Endothelial cell of umbilical vein (primary cell): ENCODE measurements at regions of chr17 and their contacts with region 1.

Region 1: GRCh38 chr17:19766422-19767270 is 18.5 kb upstream of the ALDH3A1 start:
- DNase-seq: peak; percentile 69
- H3K4me3 ChIP-seq: no peak overlapping the region
- H3K27ac ChIP-seq: no peak overlapping the region
- H3K4me1 ChIP-seq: peaks cover 5% of the 10 kb centered on the region
- H3K27me3 ChIP-seq: no peaks in the 10 kb centered on the region
- CTCF ChIP-seq: peak; percentile 96 to 99
- POLR2A ChIP-seq: no peak

Region 2: DNA sequence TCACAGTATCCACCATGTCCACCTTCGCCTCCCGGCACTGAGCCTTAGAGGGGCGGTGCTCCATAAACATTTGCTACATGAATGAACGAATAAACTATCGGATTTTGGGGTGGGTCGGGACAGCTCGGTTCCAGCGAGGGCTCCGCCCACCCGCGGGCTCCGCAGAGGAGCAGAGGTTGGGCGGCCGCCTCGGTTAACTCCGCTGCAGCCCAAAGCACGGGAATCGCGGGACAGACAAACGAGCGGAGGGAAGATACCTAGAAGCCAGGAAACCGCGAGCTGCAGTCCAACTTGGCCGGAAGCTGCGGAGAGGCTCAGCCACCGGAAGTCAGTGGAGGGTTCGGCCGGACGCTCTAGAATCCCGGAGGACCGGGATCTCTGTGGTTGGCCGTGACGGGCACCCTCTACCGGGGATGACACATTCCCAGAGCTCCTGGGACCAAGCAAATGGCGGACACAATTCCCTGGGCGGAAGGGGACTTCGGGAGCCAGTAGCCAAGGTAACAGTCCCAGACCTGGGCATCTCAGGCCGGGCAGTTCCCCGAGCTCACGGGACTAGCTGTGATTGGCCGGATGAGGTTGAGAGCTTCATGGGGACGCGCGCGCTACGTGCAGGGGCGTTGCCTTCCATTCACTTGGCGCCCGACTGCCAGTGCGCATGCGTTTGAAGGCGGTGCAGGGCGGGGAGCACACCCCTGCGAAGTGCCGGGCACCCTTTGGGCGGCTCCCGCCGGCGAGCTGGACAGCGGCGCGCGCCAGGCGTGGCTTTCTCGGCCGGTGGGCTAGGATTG is 388.8 kb before region 1 on chr17:
- CTCF ChIA-PET with region 1: interaction called, 15 read pairs
- POLR2A ChIA-PET with region 1: no interaction called
- dilution Hi-C with region 1: no loop called
- intact Hi-C with region 1: no loop called
- DNase-seq: peak; percentile 100
- H3K4me3 ChIP-seq: peak overlapping the region; percentile 72 to 94 (median 73)
- H3K27ac ChIP-seq: peak overlapping the region; percentile 59
- H3K4me1 ChIP-seq: peaks cover 7% of the 10 kb centered on the region
- H3K27me3 ChIP-seq: no peaks in the 10 kb centered on the region
- CTCF ChIP-seq: no peak
- POLR2A ChIP-seq: peak; percentile 83

Region 3: GRCh38 chr17:19513897-19514488 is 252.7 kb before region 1 on chr17:
- CTCF ChIA-PET with region 1: interaction called, 65 read pairs
- POLR2A ChIA-PET with region 1: interaction called, 7 read pairs
- dilution Hi-C with region 1: no loop called
- intact Hi-C with region 1: loop called (anchors 1 kb)
- DNase-seq: peak; percentile 73
- H3K4me3 ChIP-seq: no peak overlapping the region
- H3K27ac ChIP-seq: no peak overlapping the region
- H3K4me1 ChIP-seq: no peaks in the 10 kb centered on the region
- H3K27me3 ChIP-seq: no peaks in the 10 kb centered on the region
- CTCF ChIP-seq: peak; percentile 81 to 90
- POLR2A ChIP-seq: no peak

Region 4: DNA sequence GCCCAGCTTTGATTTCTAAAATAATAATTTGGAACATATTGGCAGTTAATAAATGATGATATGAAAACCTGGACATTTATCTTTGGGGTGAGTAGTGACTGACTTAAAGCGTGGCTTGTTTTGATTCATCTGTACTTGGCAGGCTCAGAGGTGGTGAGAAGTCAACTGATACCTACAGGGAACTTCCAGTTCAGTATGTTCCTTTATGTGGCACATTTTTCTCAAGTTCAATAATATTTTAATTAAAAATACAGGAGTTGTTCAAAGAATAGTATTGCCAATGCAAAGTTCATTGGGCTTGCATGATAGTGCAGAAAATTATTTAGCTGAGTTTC is 198.7 kb before region 1 on chr17:
- CTCF ChIA-PET with region 1: no interaction called
- POLR2A ChIA-PET with region 1: no interaction called
- dilution Hi-C with region 1: no loop called
- intact Hi-C with region 1: no loop called
- DNase-seq: no peak
- H3K4me3 ChIP-seq: no peak overlapping the region
- H3K27ac ChIP-seq: no peak overlapping the region
- H3K4me1 ChIP-seq: no peaks in the 10 kb centered on the region
- H3K27me3 ChIP-seq: no peaks in the 10 kb centered on the region
- CTCF ChIP-seq: no peak
- POLR2A ChIP-seq: no peak

Region 5: DNA sequence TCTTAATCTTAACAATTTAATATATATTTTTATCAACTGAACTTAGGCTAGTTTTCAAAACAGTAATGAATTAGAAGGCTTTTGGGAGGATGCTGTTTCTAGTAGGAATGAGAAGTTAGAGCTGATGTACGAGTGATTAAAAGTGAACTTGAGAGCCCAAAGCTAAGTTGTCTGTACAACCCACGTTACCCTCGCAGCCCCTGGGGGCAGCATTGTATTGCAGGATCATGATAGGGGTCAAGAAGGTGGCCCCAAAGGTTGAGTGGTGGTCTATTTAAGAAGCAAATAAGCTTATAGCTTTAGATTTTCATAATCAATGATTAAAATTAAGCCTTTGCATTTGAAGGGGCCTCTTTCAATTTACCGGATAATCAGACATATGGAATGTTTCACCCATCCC is 151.7 kb before region 1 on chr17:
- CTCF ChIA-PET with region 1: interaction called, 14 read pairs
- POLR2A ChIA-PET with region 1: no interaction called
- dilution Hi-C with region 1: no loop called
- intact Hi-C with region 1: loop called (anchors 1 kb)
- DNase-seq: no peak
- H3K4me3 ChIP-seq: no peak overlapping the region
- H3K27ac ChIP-seq: no peak overlapping the region
- H3K4me1 ChIP-seq: no peaks in the 10 kb centered on the region
- H3K27me3 ChIP-seq: peaks cover 0 to 2% of the 10 kb centered on the region in 2 experiments
- CTCF ChIP-seq: no peak
- POLR2A ChIP-seq: no peak

Region 6: DNA sequence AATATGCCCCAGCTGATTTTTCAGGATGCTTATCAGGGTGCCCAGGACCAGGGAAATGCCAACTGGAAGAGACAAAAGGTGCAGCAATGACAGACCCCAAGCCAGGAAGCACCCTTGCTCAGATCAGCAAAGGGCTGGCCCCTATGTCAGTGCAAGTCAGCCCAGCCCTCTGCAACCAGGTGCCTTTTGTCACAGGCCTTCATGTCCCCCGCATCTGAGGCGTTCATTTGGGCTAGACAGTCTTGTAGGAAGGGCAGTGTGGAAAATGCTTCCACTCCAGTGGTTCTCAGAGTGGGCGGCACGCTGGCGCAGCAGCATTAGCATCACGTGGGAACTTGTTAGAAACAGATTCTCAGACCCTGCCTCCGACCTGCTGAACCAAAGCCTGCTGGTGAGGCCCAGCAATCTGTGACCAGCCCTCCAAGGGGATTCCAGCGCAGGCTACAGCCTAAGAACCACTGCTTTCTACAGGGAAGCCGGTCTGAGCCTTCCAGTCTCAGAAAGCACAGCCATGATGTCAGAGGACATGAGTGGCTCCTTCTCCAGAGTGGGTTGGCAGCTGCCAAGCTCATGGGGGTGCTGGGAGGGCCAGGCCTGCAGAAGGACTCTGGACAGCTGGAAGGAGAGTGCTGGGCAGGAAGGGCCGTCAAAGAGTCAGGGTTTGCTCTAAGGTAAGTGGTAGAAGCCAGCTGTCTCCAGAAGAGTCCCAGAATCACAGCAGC is 63.4 kb before region 1 on chr17:
- CTCF ChIA-PET with region 1: interaction called, 10 read pairs
- POLR2A ChIA-PET with region 1: interaction called, 5 read pairs
- dilution Hi-C with region 1: no loop called
- intact Hi-C with region 1: no loop called
- DNase-seq: no peak
- H3K4me3 ChIP-seq: no peak overlapping the region
- H3K27ac ChIP-seq: no peak overlapping the region
- H3K4me1 ChIP-seq: no peaks in the 10 kb centered on the region
- H3K27me3 ChIP-seq: no peaks in the 10 kb centered on the region
- CTCF ChIP-seq: no peak
- POLR2A ChIP-seq: no peak

Region 7: DNA sequence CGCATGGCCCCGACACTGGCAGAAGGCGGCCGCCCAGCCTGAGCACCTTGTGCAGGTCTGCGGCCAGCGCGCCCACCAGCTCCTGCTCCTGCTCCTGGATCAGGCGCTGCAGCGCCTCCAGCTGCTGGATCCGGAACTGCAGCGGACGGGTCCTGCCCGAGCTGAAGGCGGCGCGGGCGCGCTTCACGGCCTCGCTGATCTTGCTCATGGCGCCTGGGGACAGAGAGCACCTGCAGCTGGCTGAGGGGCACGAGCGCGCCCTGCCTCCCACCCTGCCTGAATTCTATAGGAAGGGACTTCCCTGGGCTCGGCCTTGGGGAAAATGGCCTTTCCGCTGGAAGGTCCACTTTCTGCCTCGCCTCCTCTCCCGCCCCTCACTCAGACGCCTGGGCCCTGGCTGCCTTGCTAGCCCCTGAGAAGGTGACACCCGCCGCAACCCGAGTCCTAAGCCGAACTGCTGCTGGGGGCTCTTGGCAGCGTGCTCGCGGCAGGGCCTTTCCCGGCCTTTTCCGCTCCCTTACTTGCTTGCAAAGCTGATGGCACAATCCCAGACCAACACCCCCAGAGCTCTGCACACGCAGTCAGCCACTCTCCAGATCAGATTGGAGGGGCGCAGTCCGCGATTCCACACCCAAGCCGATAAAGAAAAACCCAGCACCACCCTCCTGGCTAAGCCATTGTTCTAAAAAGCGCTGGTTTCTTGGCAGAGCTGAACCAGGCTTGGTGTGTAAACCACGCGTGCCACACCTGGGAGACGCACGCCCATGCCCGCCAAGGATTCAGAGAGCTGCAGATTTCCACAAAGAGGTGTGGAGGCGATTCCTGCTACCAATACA is 21.5 kb before region 1 on chr17:
- CTCF ChIA-PET with region 1: interaction called, 100 read pairs
- POLR2A ChIA-PET with region 1: interaction called, 6 read pairs
- dilution Hi-C with region 1: no loop called
- intact Hi-C with region 1: no loop called
- DNase-seq: peak; percentile 84
- H3K4me3 ChIP-seq: peak overlapping the region in 1 of 3 experiments; percentile 37
- H3K27ac ChIP-seq: no peak overlapping the region
- H3K4me1 ChIP-seq: peaks cover 5% of the 10 kb centered on the region
- H3K27me3 ChIP-seq: no peaks in the 10 kb centered on the region
- CTCF ChIP-seq: peak; percentile 90 to 99
- POLR2A ChIP-seq: no peak

Region 8: DNA sequence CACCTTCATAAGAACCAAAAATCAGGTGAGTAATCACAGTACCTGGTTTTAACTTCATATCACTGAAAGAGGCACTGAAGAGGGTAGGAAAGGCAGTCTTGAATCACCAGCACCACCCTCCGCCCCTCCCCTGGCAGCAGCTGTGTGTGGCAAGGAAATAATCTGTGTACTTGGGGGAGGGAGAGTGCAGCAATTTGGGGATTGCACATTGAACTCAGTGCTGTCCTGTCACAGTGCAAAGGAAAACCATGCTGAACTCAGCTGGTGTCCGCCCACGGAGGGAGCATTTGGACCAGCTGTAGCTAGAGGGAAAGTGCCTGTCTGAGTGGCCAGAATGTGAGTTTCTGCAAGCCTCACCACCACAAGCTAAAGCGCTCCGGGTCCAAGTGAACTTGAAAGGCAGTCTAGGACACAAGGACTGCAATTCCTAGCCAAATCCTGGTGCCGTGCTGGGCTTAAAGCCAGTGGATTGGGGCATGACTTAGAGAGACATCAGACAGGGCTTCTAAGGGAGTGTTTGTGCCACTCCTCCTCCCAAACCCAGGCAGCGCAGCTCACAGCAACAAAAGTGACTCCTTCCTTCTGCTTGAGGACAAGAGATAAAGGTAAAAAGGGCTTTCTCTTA is 21.2 kb after region 1 on chr17:
- CTCF ChIA-PET with region 1: interaction called, 4 read pairs
- POLR2A ChIA-PET with region 1: interaction called, 10 read pairs
- dilution Hi-C with region 1: no loop called
- intact Hi-C with region 1: no loop called
- DNase-seq: no peak
- H3K4me3 ChIP-seq: no peak overlapping the region
- H3K27ac ChIP-seq: no peak overlapping the region
- H3K4me1 ChIP-seq: no peaks in the 10 kb centered on the region
- H3K27me3 ChIP-seq: no peaks in the 10 kb centered on the region
- CTCF ChIP-seq: no peak
- POLR2A ChIP-seq: no peak

Region 9: DNA sequence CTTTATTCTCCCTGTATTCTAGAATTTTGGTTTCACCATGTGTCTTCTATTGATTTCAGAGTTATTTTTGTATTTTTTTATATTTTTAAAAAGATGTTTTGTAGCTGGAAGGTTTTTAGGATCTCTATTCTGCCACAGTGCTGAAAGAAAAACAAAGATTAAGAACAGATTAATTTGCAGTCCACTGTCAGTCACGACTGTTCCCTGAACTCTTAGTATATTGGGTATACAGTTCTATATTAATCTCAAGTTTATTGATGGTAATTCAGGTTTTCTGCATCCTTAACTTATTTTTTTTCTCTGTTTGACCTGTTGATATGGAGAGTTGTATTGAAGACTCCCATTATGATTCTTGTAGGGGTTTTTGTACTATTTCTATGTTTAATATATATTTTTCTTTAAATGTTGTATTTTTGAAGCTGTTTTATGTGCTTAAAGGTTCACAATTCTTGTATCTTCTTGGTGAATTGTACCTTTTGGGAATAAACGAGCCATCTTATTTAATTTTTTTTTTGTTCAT is 245.4 kb after region 1 on chr17:
- CTCF ChIA-PET with region 1: no interaction called
- POLR2A ChIA-PET with region 1: no interaction called
- dilution Hi-C with region 1: no loop called
- intact Hi-C with region 1: no loop called
- DNase-seq: no peak
- H3K4me3 ChIP-seq: no peak overlapping the region
- H3K27ac ChIP-seq: no peak overlapping the region
- H3K4me1 ChIP-seq: peaks cover 9% of the 10 kb centered on the region
- H3K27me3 ChIP-seq: peaks cover 15 to 36% of the 10 kb centered on the region in 2 experiments
- CTCF ChIP-seq: no peak
- POLR2A ChIP-seq: no peak